PC-9 (cell line): ENCODE measurements at regions of chr18 and their contacts with region 1.

Region 1: DNA sequence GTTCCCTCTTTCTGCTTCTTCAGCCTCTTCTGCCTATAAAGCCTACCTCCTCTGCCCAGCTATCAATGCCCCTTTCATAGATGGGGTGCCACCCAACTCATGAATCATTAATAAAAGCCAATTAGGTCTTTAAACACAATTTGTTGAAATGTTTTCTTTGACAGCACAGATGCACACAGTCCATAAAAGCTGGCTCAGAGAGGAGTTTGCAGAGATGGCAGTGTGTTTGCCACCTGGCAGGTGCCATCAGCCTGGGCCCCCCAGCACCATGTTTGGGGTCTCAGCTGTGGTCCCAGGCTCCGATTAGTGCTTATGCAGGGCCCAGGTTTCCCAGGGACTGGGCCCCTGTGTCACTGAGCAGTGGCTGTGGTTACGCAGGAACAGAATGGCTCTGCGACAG is 7.9 kb upstream of the MC2R start:
- DNase-seq: no peak
- H3K4me3 ChIP-seq: no peak overlapping the region
- H3K27ac ChIP-seq: no peak overlapping the region
- H3K4me1 ChIP-seq: no peaks in the 10 kb centered on the region
- H3K27me3 ChIP-seq: peaks cover 75% of the 10 kb centered on the region
- CTCF ChIP-seq: no peak

Region 2: DNA sequence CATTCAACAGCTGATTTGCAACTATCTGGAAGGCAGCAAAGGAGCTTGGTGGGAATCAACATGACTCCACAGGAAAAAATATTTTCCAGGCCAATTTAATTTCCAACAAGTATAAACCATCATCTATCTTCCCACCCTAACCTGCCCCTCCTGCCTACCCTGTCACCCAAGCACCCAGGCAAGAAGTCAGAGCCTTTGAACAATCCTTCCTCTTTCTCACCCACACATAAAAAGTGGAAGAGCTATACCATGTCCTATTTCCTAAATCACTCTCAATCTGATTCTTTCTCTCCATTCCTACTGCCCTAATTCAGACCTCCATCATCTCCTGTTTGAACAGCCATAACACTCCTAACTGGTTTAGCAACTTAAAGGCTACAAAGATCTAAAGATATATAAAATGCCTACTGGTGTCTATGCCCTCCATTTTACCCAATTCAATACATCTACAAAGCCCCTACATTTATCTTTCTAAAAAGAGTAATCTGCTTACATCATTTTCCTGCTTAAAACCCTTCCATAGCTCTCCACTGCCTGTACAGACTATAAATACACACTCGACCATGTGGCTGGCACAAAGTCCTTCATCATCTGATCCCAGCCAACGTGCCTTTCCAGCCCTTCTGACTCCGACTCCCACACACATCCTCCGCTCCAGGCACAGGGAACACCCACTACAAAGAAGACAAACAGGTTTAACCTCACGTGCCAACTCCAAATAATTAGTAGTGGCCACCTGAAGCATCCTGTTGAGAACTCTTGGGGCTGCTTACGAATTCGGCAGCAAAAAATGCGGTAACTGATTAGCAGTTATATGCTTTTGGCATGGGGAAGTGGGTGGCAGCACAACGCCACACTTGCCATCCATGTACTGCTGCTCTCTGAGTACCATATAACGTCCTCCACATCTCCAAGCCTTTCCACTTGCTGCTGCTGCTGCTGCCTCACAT is 1277.7 kb before region 1 on chr18:
- CTCF ChIA-PET with region 1: no interaction called
- POLR2A ChIA-PET with region 1: interaction called, 10 read pairs
- intact Hi-C with region 1: no loop called
- DNase-seq: peak in 1 of 2 experiments; percentile 13
- H3K4me3 ChIP-seq: no peak overlapping the region
- H3K27ac ChIP-seq: no peak overlapping the region
- H3K4me1 ChIP-seq: peaks cover 14% of the 10 kb centered on the region
- H3K27me3 ChIP-seq: no peaks in the 10 kb centered on the region
- CTCF ChIP-seq: no peak

Region 3: DNA sequence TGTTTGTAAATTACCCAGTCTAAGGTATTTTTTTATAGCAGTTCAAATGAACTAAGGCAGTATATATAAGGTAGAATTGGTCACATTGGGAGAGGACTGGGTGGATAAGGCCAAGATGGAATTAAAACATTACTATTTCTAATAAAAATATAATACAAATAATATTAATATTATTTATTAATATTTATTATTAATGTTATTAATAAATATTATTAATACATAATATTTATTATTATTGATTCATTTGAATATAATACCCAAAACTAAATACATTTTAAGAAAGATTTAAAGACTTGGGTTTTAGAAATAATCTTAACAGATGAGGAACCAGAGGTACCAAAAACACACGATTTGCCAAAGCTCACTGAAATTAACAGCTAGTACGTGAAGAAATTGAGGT is 22.6 kb after region 1 on chr18:
- CTCF ChIA-PET with region 1: no interaction called
- POLR2A ChIA-PET with region 1: no interaction called
- intact Hi-C with region 1: no loop called
- DNase-seq: no peak
- H3K4me3 ChIP-seq: no peak overlapping the region
- H3K27ac ChIP-seq: no peak overlapping the region
- H3K4me1 ChIP-seq: no peaks in the 10 kb centered on the region
- H3K27me3 ChIP-seq: peaks cover 9% of the 10 kb centered on the region; the same call in 1 of the 2 replicates
- CTCF ChIP-seq: no peak